Endothelial cell of umbilical vein (primary cell): ENCODE measurements at regions of chr6 and their contacts with region 1.

Region 1: GRCh38 chr6:13538084-13538483 is 36.3 kb upstream of the SIRT5 start:
- DNase-seq: peak; percentile 68
- H3K4me3 ChIP-seq: no peak overlapping the region
- H3K27ac ChIP-seq: no peak overlapping the region
- H3K4me1 ChIP-seq: peaks cover 9% of the 10 kb centered on the region
- H3K27me3 ChIP-seq: no peaks in the 10 kb centered on the region
- CTCF ChIP-seq: peak; percentile 23 to 25
- POLR2A ChIP-seq: no peak

Region 2: DNA sequence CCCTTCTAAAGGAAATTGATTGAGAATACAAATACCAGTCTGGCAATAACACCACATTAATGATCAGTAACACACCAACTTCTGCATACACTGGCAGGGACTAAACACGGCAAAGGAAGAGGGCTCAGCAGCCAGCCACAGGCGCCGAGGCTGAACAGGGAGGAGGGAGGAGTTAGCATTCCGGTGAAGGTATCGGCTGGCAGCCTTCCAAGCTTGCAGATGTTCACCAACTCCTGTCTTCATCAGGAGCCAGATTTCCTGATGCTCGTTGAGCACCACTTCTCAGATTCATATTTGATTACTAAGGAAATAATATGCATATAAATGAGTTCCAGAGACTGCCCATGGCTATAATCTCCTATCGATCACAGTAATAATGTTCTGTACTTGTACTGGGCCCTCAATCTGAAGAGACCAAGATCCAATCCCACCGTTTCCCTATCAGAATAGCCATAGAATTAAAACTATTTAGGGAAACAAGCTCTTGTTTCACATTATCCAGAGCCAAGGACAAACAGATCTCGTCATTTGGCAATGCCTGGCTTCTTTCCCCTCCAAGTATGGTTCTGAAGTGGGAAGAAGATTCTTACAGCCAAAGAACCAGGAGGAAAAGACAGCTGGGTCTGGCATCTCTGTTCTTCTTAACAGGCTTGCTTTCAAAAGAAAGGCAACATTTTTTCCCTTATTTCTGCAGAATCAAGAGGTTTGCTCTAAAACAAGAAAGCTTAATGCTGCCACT is 92.9 kb before region 1 on chr6:
- CTCF ChIA-PET with region 1: no interaction called
- POLR2A ChIA-PET with region 1: no interaction called
- dilution Hi-C with region 1: no loop called
- intact Hi-C with region 1: loop called (anchors 5 kb)
- DNase-seq: peak; percentile 59
- H3K4me3 ChIP-seq: no peak overlapping the region
- H3K27ac ChIP-seq: no peak overlapping the region
- H3K4me1 ChIP-seq: peaks cover 24% of the 10 kb centered on the region
- H3K27me3 ChIP-seq: no peaks in the 10 kb centered on the region
- CTCF ChIP-seq: no peak
- POLR2A ChIP-seq: no peak

Region 3: GRCh38 chr6:13709689-13710551 is 171.8 kb after region 1 on chr6:
- CTCF ChIA-PET with region 1: no interaction called
- POLR2A ChIA-PET with region 1: no interaction called
- dilution Hi-C with region 1: no loop called
- intact Hi-C with region 1: no loop called
- DNase-seq: peak; percentile 72
- H3K4me3 ChIP-seq: peak overlapping the region; percentile 79 to 99 (median 95)
- H3K27ac ChIP-seq: peak overlapping the region; percentile 70
- H3K4me1 ChIP-seq: peaks cover 25% of the 10 kb centered on the region
- H3K27me3 ChIP-seq: no peaks in the 10 kb centered on the region
- CTCF ChIP-seq: no peak
- POLR2A ChIP-seq: no peak